GM12878 (cell line): ENCODE measurements at regions of chr6 and their contacts with region 1.

Region 1: DNA sequence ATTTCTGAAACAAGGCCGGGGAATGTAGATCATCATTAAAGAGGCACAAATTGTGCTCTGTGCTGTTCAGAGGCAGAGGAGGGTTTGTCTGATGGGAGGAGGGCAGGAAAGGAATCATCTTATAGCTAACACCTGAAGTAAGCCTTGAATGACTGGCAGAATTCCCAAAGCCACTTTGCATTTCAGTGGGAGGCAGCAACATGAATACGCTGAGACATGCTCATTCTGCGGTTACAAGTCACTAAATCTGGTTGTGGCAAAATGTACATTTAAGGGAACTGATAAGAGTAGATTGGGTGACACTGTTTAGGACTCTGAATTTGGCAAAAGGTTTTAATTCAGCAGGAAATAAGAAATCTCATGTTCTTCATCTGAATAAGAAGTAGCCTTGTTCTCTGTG is 4.4 kb upstream of the COL19A1 start:
- DNase-seq: no peak
- ATAC-seq: no peak
- H3K4me3 ChIP-seq: no peak overlapping the region
- H3K27ac ChIP-seq: no peak overlapping the region
- H3K4me1 ChIP-seq: 0 out of 2 replicates have a peak, but pooled peaks cover 3% of the 10 kb centered on the region
- H3K27me3 ChIP-seq: no peaks in the 10 kb centered on the region
- CTCF ChIP-seq: no peak
- EP300 ChIP-seq: no peak
- POLR2A ChIP-seq: no peak
- RAD21 ChIP-seq: no peak

Region 2: DNA sequence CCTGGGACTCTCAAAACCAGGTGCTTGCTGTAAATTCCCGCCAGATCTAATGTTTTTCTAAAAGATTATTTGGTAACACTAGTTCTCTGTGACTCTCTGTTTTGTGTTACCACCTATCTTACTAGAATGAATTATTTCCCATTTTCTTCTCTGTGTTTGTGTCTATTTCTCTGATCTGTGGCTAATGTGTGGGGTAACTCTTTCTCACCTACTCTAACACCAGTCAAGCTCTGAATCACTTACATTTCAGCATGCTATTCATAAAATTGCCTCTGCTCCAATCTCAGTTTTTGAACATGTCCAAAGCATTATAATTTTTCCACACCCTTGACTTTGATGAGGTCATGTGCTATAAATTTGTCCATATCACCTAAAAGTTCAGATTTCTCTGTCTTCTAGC is 18.8 kb before region 1 on chr6:
- CTCF ChIA-PET with region 1: interaction called, 20 read pairs
- POLR2A ChIA-PET with region 1: interaction called, 5 read pairs
- RAD21 ChIA-PET with region 1: interaction called, 21 read pairs
- SMC1A ChIA-PET with region 1: interaction called, 79 read pairs
- in situ Hi-C with region 1: no loop called
- intact Hi-C with region 1: no loop called
- DNase-seq: no peak
- ATAC-seq: peak; percentile 80
- H3K4me3 ChIP-seq: no peak overlapping the region
- H3K27ac ChIP-seq: no peak overlapping the region
- H3K4me1 ChIP-seq: no peaks in the 10 kb centered on the region
- H3K27me3 ChIP-seq: no peaks in the 10 kb centered on the region
- CTCF ChIP-seq: no peak
- EP300 ChIP-seq: peak; percentile 5 to 48; a peak in 1 of 4 replicates
- POLR2A ChIP-seq: no peak
- RAD21 ChIP-seq: no peak

Region 3: GRCh38 chr6:69848552-69848951 is 13.4 kb before region 1 on chr6:
- CTCF ChIA-PET with region 1: interaction called, 10 read pairs
- POLR2A ChIA-PET with region 1: interaction called, 5 read pairs
- RAD21 ChIA-PET with region 1: interaction called, 21 read pairs
- SMC1A ChIA-PET with region 1: interaction called, 79 read pairs
- in situ Hi-C with region 1: no loop called
- intact Hi-C with region 1: no loop called
- DNase-seq: no peak
- ATAC-seq: no peak
- H3K4me3 ChIP-seq: no peak overlapping the region
- H3K27ac ChIP-seq: no peak overlapping the region
- H3K4me1 ChIP-seq: no peaks in the 10 kb centered on the region
- H3K27me3 ChIP-seq: no peaks in the 10 kb centered on the region
- CTCF ChIP-seq: no peak
- EP300 ChIP-seq: no peak
- POLR2A ChIP-seq: no peak
- RAD21 ChIP-seq: no peak

Region 4: GRCh38 chr6:70980725-70981124 is 1118.7 kb after region 1 on chr6:
- CTCF ChIA-PET with region 1: no interaction called
- POLR2A ChIA-PET with region 1: no interaction called
- RAD21 ChIA-PET with region 1: no interaction called
- SMC1A ChIA-PET with region 1: no interaction called
- in situ Hi-C with region 1: no loop called
- intact Hi-C with region 1: no loop called
- DNase-seq: no peak
- ATAC-seq: no peak
- H3K4me3 ChIP-seq: no peak overlapping the region
- H3K27ac ChIP-seq: no peak overlapping the region
- H3K4me1 ChIP-seq: no peaks in the 10 kb centered on the region
- H3K27me3 ChIP-seq: no peaks in the 10 kb centered on the region
- CTCF ChIP-seq: no peak
- EP300 ChIP-seq: no peak
- POLR2A ChIP-seq: no peak
- RAD21 ChIP-seq: no peak